ENCODE measurements at regions of chr20 and their contacts with region 1.

Region 1: GRCh38 chr20:5658912-5659345 is 91.3 kb upstream of the SHLD1 start:
- DNase-seq: peak; percentile 91
- ATAC-seq: peak; percentile 24; the same call in 1 of the 2 replicates
- H3K4me3 ChIP-seq: no peak overlapping the region
- H3K27ac ChIP-seq: peak overlapping the region; percentile 71; the same call in 1 of the 2 replicates
- H3K4me1 ChIP-seq: peaks cover 24% of the 10 kb centered on the region
- H3K27me3 ChIP-seq: no peaks in the 10 kb centered on the region
- CTCF ChIP-seq: no peak
- POLR2A ChIP-seq: no peak
- RAD21 ChIP-seq: no peak

Region 2: GRCh38 chr20:5696011-5696559 is 37.2 kb after region 1 on chr20:
- CTCF ChIA-PET with region 1: no interaction called
- POLR2A ChIA-PET with region 1: no interaction called
- dilution Hi-C with region 1: no loop called
- in situ Hi-C with region 1: no loop called
- intact Hi-C with region 1: loop called (anchors 5 kb)
- DNase-seq: peak; percentile 99
- ATAC-seq: peak; percentile 98
- H3K4me3 ChIP-seq: no peak overlapping the region
- H3K27ac ChIP-seq: peak overlapping the region; percentile 64
- H3K4me1 ChIP-seq: peaks cover 6% of the 10 kb centered on the region
- H3K27me3 ChIP-seq: no peaks in the 10 kb centered on the region
- CTCF ChIP-seq: no peak
- POLR2A ChIP-seq: no peak
- RAD21 ChIP-seq: no peak

Region 3: GRCh38 chr20:5735845-5736525 is 77.1 kb after region 1 on chr20:
- CTCF ChIA-PET with region 1: no interaction called
- POLR2A ChIA-PET with region 1: no interaction called
- dilution Hi-C with region 1: no loop called
- in situ Hi-C with region 1: no loop called
- intact Hi-C with region 1: loop called (anchors 5 kb)
- DNase-seq: peak; percentile 49
- ATAC-seq: no peak
- H3K4me3 ChIP-seq: no peak overlapping the region
- H3K27ac ChIP-seq: peak overlapping the region; percentile 88; the same call in 1 of the 2 replicates
- H3K4me1 ChIP-seq: peaks cover 16% of the 10 kb centered on the region
- H3K27me3 ChIP-seq: peaks cover 1% of the 10 kb centered on the region; the same call in 1 of the 2 replicates
- CTCF ChIP-seq: no peak
- POLR2A ChIP-seq: no peak
- RAD21 ChIP-seq: no peak

Region 4: DNA sequence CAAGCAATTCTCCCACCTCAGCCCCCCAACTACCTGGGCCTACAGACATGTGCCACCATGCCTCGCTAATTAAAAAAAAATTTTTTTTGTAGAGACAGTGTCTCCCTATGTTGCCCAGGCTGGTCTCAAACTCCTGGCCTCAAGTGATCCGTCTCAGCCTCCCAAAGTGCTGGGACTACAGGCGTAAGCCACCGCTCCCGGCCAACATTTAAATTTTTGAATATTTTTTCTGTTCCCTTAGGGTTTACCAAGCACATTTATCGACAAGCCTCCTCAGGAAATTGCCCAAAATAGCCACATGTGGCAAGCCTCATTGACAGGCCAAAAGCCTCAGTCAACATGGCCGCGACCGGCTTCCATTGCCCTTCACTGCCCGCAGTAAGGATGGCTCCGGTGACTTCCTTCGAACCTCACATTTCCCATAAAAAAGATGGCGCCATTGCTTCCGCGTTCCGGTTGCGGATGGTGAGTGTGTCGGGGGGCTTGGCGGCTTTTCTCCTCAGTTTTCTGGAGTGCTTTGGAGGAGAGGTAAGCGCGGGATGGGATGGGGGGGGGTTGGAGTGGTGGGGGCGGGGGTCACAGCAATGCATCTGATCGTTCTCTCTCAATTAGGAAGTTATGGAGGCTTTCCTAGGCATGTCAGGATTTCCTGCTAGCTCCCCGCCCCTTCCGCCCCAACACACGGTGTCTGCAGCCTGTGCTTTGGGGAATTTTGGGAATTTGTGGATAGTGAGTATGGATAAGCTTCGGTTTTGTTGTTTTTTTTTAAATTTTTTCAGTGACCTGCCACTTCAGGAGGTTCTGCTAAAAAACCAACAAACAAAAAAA is 91.2 kb after region 1 on chr20 and contains the start of gene SHLD1:
- CTCF ChIA-PET with region 1: no interaction called
- POLR2A ChIA-PET with region 1: no interaction called
- dilution Hi-C with region 1: no loop called
- in situ Hi-C with region 1: no loop called
- intact Hi-C with region 1: no loop called
- DNase-seq: peak; percentile 88
- ATAC-seq: peak; percentile 97
- H3K4me3 ChIP-seq: peak within 1 kb of the TSS; percentile 45
- H3K27ac ChIP-seq: peak within 1 kb of the TSS; percentile 95
- H3K4me1 ChIP-seq: peaks cover 3% of the 10 kb centered on the region; the same call in 1 of the 2 replicates
- H3K27me3 ChIP-seq: no peaks in the 10 kb centered on the region
- CTCF ChIP-seq: no peak
- POLR2A ChIP-seq: peak; percentile 56; the same call in 1 of the 2 replicates
- RAD21 ChIP-seq: no peak
- total RNA-seq, gene SHLD1: 1.9 and 3.0 TPM in 2 replicates